ENCODE measurements at regions of chr1 and their contacts with region 1.

Region 1: GRCh38 chr1:100443811-100444571 is 91.7 kb downstream of the CDC14A start:
- DNase-seq: no peak
- CTCF ChIP-seq: no peak

Region 2: GRCh38 chr1:100423832-100424337 is 20.1 kb before region 1 on chr1:
- CTCF ChIA-PET with region 1: interaction called, 15 read pairs
- POLR2A ChIA-PET with region 1: no interaction called
- DNase-seq: peak; percentile 18
- CTCF ChIP-seq: no peak

Region 3: DNA sequence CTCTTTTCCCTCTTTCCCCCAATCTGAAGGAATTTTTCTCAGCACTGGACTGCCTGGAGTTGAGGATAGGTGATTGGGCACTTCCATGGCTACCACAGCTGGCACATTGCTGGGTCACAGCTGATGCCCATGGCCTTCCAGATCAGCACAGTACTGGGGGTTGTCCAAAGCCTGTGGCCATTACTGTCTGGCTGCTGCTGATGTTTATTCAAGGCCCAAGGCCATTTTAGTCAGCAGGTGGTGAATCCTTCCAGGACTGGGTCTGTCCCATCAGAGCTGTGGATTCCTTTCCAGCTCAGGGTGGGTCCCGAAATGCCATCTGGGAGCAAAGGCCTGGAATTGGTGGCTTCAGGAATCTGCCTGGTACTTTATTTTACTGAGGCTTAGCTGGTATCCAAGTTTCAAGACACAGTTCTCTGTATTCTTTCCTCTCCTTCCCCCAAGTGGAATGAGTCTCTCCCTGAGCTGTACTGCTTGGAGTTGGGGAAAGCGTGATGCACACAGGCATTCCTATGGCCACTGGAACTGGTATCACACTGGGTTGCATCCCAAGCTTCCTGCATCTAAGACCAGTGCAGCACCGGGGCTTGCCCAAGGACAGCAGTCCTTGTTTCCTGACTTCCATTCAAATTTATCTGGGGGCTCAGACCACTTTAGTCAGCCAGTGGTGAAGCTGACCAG is 113.1 kb after region 1 on chr1:
- CTCF ChIA-PET with region 1: no interaction called
- POLR2A ChIA-PET with region 1: no interaction called
- DNase-seq: no peak
- CTCF ChIP-seq: no peak

Measured in GM10248 (cell line).